ENCODE measurements at regions of chr11 and their contacts with region 1.

Region 1: DNA sequence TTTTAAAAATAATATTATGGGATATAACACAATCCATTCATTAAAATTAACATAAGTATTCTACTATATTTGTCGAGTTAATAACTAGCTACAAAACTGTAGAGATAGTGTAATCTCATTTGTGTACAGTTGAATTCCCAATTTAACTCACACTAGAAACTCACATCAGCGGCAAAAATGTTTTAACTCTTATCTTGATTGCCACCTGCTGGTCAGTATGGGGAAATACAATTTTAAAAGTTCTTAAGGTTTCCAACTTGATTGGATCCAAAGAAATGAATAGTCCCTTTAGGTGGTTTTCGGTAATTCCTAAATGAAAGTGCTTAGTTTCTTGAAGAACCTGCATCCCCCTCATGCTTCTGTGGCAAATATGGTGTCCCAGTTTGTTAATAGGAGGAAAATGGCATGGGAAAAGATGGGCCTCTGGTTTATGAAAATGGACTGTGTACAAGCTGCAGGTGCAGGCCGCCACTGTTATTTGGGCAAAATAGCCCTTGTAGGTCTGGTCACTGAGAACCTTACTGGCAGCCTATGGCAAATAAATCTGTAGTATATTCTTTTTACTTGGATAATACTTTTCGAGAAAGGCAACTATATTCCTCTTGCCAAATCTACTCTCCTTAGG is 33.7 kb upstream of the SLC17A6 start:
- DNase-seq: no peak
- ATAC-seq: no peak
- H3K4me3 Mint-ChIP-seq: no peak overlapping the region
- H3K27ac Mint-ChIP-seq: no peak overlapping the region
- H3K4me1 Mint-ChIP-seq: no peaks in the 10 kb centered on the region
- H3K27me3 Mint-ChIP-seq: peaks cover 12% of the 10 kb centered on the region

Region 2: DNA sequence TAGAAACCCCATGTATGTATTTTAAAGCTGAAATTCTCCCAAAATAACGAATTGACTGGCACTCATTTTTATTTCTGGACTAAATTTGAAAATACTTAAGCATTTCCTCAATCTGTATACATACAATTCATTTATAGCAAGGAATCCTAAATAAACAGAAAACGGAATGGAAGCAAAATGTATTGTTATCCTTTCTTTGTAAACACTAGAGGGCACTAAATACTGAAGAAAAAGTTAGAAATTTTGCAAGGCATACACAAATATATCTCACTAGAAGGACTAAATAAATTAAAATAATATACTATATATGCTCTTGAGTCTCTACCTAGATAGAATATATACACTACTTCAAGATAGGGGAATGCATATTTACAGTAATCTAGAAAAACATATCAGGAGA is 134.6 kb before region 1 on chr11:
- CTCF ChIA-PET with region 1: interaction called, 4 read pairs
- POLR2A ChIA-PET with region 1: no interaction called
- intact Hi-C with region 1: loop called (anchors 2 to 5 kb)
- DNase-seq: no peak
- ATAC-seq: no peak
- H3K4me3 Mint-ChIP-seq: no peak overlapping the region
- H3K27ac Mint-ChIP-seq: no peak overlapping the region
- H3K4me1 Mint-ChIP-seq: no peaks in the 10 kb centered on the region
- H3K27me3 Mint-ChIP-seq: no peaks in the 10 kb centered on the region

Region 3: GRCh38 chr11:22244986-22245592 is 59.4 kb before region 1 on chr11:
- CTCF ChIA-PET with region 1: interaction called, 13 read pairs
- POLR2A ChIA-PET with region 1: no interaction called
- intact Hi-C with region 1: loop called (anchors 1 kb)
- DNase-seq: peak; percentile 37
- ATAC-seq: peak; percentile 60
- H3K4me3 Mint-ChIP-seq: no peak overlapping the region
- H3K27ac Mint-ChIP-seq: no peak overlapping the region
- H3K4me1 Mint-ChIP-seq: no peaks in the 10 kb centered on the region
- H3K27me3 Mint-ChIP-seq: peaks cover 14% of the 10 kb centered on the region